GM10248 (cell line): ENCODE measurements at regions of chrX and their contacts with region 1.

Region 1: DNA sequence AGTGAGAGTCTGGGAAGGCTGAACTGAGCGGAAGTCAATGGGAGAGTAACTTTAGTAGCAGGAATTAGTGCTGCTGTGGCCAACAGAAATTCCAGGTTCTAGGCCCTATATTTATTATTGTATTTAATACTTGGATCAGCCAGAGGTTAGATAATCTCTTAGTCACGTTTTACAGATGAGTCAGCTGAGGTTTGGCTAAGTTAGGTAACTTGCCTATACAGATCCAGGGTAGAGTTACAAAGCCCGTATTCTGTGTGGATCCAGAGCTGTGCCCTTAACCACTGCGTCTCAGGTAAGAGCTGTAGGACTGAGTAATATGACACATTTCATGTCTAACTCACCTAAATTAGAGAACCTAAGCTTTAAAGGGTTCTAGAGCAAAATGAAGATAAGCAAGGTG is 20.5 kb downstream of the PSMD10 start:
- DNase-seq: no peak
- CTCF ChIP-seq: no peak

Region 2: GRCh38 chrX:107871136-107871535 is 199.8 kb before region 1 on chrX:
- CTCF ChIA-PET with region 1: no interaction called
- POLR2A ChIA-PET with region 1: no interaction called
- DNase-seq: no peak
- CTCF ChIP-seq: no peak

Region 3: GRCh38 chrX:108020631-108021030 is 50.3 kb before region 1 on chrX:
- CTCF ChIA-PET with region 1: interaction called, 26 read pairs
- POLR2A ChIA-PET with region 1: no interaction called
- DNase-seq: peak; percentile 8
- CTCF ChIP-seq: peak; percentile 47

Region 4: GRCh38 chrX:108059801-108060200 is 11.1 kb before region 1 on chrX:
- CTCF ChIA-PET with region 1: interaction called, 17 read pairs
- POLR2A ChIA-PET with region 1: no interaction called
- DNase-seq: no peak
- CTCF ChIP-seq: no peak

Region 5: DNA sequence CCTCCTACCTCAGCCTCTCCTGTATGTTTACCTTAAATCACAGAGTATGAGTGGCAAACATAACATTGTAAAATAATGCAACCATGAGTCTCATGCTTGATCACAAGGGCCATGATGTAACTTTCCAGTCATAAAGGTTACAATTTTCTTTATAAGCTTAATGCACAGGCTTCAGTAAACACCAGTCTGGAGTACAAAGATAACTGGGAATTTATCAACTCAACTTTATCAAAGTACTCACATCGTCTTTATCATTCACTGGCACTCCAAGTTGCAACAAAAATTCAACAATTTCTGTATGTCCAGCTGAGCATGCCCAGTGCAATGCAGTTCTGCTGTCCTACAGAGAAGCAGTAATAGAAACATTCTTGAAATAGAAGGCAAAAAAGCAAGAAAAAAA is 17.6 kb after region 1 on chrX:
- CTCF ChIA-PET with region 1: interaction called, 13 read pairs
- POLR2A ChIA-PET with region 1: no interaction called
- DNase-seq: no peak
- CTCF ChIP-seq: no peak

Region 6: GRCh38 chrX:108131471-108131870 is 60.6 kb after region 1 on chrX:
- CTCF ChIA-PET with region 1: no interaction called
- POLR2A ChIA-PET with region 1: no interaction called
- DNase-seq: no peak
- CTCF ChIP-seq: no peak

Region 7: GRCh38 chrX:108148524-108148923 is 77.6 kb after region 1 on chrX:
- CTCF ChIA-PET with region 1: no interaction called
- POLR2A ChIA-PET with region 1: no interaction called
- DNase-seq: no peak
- CTCF ChIP-seq: no peak